ENCODE measurements at regions of chr3 and their contacts with region 1.

Region 1: GRCh38 chr3:49802719-49803464 is at the start of gene INKA1:
- DNase-seq: peak; percentile 91 to 95 (median 94)
- ATAC-seq: peak; percentile 91
- H3K4me3 ChIP-seq: peak within 1 kb of the TSS; percentile 51
- H3K4me1 ChIP-seq: peaks cover 16% of the 10 kb centered on the region
- CTCF ChIP-seq: peak; percentile 92
- total RNA-seq, gene INKA1: 0.58 to 2.8 (median 1.6) TPM

Region 2: DNA sequence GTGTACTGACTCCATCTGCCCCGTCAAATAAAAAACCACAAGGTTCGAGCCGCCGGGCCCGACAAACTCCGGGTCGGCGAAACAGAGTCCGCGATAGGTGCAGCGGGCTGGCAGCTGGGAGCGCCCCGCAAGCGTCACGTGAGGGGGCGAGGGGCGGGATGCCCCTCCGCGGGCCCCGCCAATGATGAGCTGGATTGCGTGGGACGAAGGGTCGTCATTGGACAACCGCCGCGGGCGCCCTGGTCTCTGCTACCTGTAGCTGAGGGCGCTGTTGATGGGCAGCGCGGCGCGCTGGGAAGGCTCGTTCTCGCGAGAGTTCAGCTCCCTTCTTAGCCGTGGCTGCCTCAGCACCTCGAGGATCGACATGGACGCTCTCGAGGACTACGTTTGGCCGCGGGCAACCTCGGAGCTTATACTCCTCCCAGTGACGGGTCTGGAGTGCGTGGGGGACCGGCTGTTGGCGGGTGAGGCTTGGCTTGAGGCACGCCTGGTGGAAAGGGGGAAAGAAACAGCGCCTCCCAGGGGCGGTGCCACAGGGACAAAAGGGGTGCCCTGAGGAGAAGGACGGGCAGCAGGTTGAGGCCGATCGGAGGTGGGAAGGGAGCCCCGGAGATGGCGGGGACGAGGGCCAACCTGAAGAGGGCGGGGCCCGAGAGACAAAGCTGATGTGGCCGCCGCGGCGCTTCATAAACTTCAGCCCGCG is 795.7 kb before region 1 on chr3 and contains the start of gene WDR6:
- intact Hi-C with region 1: no loop called
- DNase-seq: peak; percentile 97 to 99 (median 97)
- ATAC-seq: peak; percentile 89
- H3K4me3 ChIP-seq: peak within 1 kb of the TSS; percentile 51
- H3K4me1 ChIP-seq: peaks cover 9% of the 10 kb centered on the region
- CTCF ChIP-seq: no peak
- total RNA-seq, gene WDR6: 98.5 to 205 (median 165) TPM

Region 3: GRCh38 chr3:49839193-49839809 is 36.4 kb after region 1 on chr3:
- intact Hi-C with region 1: loop called (anchors 5 kb)
- DNase-seq: peak; percentile 73 to 88 (median 84)
- ATAC-seq: peak; percentile 93
- H3K4me3 ChIP-seq: no peak overlapping the region
- H3K4me1 ChIP-seq: no peaks in the 10 kb centered on the region
- CTCF ChIP-seq: peak; percentile 76